ENCODE measurements at regions of chr6 and their contacts with region 1.

Region 1: GRCh38 chr6:118565311-118565960 is 17.3 kb downstream of the PLN start:
- DNase-seq: peak in 3 of 5 donors; percentile 43 to 59 (median 47)
- H3K4me3 ChIP-seq: no peak overlapping the region
- H3K4me3 Mint-ChIP-seq: no peak overlapping the region
- H3K27ac ChIP-seq: no peak overlapping the region
- H3K27ac Mint-ChIP-seq: peak overlapping the region in 6 of 8 donors; percentile 28 to 70 (median 44)
- H3K4me1 ChIP-seq: peaks cover 5% of the 10 kb centered on the region
- H3K4me1 Mint-ChIP-seq: peaks cover 22 to 47% (median 44%) of the 10 kb centered on the region in 3 donors
- H3K27me3 ChIP-seq: no peaks in the 10 kb centered on the region
- H3K27me3 Mint-ChIP-seq: no peaks in the 10 kb centered on the region

Region 2: GRCh38 chr6:118776607-118777549 is 211.4 kb after region 1 on chr6:
- CTCF ChIA-PET with region 1: interaction called, 13 read pairs
- POLR2A ChIA-PET with region 1: no interaction called
- DNase-seq: peak in 4 of 5 donors; percentile 32 to 70 (median 64)
- H3K4me3 ChIP-seq: no peak overlapping the region
- H3K4me3 Mint-ChIP-seq: peak overlapping the region in 2 of 7 donors; percentile 2 to 36
- H3K27ac ChIP-seq: no peak overlapping the region
- H3K27ac Mint-ChIP-seq: peak overlapping the region; percentile 5 to 76 (median 62)
- H3K4me1 ChIP-seq: peaks cover 16% of the 10 kb centered on the region
- H3K4me1 Mint-ChIP-seq: peaks cover 14 to 24% (median 18%) of the 10 kb centered on the region in 3 donors
- H3K27me3 ChIP-seq: no peaks in the 10 kb centered on the region
- H3K27me3 Mint-ChIP-seq: peaks cover 1 to 6% of the 10 kb centered on the region in 2 donors

Measured in CD8-positive, alpha-beta memory T cell (primary cell).